PC-9 (cell line): ENCODE measurements at regions of chr16 and their contacts with region 1.

Region 1: DNA sequence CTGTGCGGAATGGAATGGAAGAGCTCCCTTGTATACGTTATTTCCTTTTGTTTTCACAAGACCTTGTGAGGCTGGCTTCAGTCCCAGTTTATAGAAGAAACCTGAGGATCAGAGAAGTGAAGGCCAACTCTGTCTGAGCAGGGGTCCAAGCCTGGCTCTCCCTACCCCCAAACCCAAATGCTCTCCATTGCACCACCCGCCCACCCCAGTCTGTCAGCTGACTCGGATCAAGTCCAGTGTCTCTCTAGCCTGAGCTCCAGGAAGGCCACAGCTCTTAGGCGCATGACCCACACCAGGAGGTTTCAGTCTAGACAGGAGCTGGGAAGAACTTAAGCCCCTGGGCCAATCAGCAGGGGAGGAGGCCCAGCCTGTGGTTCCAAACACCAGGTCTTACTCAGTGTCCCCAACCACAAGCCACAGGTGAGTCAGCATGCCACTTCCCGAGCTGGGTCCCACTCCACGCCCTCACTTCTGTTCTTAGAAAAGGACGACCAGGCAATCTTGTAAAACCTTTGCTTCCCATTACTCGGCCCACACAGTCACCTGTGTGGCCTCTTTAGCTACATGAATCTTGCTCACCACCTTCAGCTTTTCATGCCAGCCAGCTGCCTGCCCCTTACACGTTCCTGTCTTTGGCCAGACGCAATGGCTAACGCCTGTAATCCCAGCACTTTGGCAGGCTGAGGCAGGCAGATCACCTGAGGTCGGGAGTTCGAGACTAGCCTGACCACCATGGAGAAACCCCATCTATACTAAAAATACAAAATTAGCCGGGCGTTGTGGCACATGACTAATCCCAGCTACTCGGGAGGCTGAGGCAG is 27.8 kb downstream of the TK2 start:
- DNase-seq: peak; percentile 91 to 98
- H3K4me3 ChIP-seq: no peak overlapping the region
- H3K27ac ChIP-seq: peak overlapping the region; percentile 82
- H3K4me1 ChIP-seq: peaks cover 49% of the 10 kb centered on the region
- H3K27me3 ChIP-seq: no peaks in the 10 kb centered on the region
- CTCF ChIP-seq: no peak

Region 2: DNA sequence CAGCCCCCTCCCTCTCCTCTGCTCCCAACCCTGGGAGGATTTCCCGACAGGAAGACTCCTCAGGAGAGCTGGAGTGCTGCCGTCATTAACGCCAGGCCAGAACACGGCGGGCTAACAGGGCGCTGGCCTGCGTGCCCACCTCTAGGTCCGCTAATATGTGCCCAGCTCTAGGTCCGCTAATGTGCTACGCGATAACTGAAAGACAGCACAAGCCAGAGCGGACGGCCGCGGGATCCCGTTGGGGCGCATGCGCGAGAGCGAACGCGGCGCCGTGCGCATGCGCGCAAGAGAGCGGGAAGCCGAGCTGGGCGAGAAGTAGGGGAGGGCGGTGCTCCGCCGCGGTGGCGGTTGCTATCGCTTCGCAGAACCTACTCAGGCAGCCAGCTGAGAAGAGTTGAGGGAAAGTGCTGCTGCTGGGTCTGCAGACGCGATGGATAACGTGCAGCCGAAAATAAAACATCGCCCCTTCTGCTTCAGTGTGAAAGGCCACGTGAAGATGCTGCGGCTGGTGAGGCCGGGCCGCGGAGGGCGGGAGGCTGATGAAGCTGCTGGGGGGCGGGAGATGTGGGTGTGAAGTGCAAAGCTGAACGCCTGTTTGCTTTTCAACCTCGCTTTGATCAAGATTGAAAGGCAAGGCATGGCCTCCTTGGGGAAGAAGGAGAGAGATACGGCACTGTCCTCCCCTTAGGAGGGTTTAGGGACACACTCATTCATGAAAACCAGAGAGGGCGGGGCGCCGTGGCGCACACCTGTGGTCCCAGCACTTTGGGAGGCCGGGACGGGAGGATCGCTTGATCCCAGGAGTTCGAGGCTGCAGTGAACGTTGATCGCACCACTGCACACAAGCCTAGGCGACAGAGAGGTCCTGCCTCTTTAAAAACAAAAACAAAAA is 30.4 kb after region 1 on chr16 and contains the start of gene CKLF:
- CTCF ChIA-PET with region 1: no interaction called
- POLR2A ChIA-PET with region 1: interaction called, 9 read pairs
- intact Hi-C with region 1: loop called (anchors 2 kb)
- DNase-seq: peak; percentile 75 to 91
- H3K4me3 ChIP-seq: peak within 1 kb of the TSS; percentile 66
- H3K27ac ChIP-seq: no peak within 1 kb of the TSS
- H3K4me1 ChIP-seq: peaks cover 30% of the 10 kb centered on the region
- H3K27me3 ChIP-seq: no peaks in the 10 kb centered on the region
- CTCF ChIP-seq: no peak
- total RNA-seq, gene CKLF: 77.1 and 86.4 TPM in 2 replicates